ENCODE measurements at regions of chr18 and their contacts with region 1.

Region 1: GRCh38 chr18:45384137-45384961 is 230.9 kb upstream of the SLC14A2 start:
- DNase-seq: peak; percentile 77
- ATAC-seq: peak; percentile 89
- H3K4me3 Mint-ChIP-seq: no peak overlapping the region
- H3K27ac Mint-ChIP-seq: peak overlapping the region; percentile 83; the same call in 1 of the 2 replicates
- H3K4me1 Mint-ChIP-seq: peaks cover 8% of the 10 kb centered on the region
- H3K27me3 Mint-ChIP-seq: no peaks in the 10 kb centered on the region; the same call in 1 of the 2 replicates
- CTCF ChIP-seq: peak; percentile 79

Region 2: DNA sequence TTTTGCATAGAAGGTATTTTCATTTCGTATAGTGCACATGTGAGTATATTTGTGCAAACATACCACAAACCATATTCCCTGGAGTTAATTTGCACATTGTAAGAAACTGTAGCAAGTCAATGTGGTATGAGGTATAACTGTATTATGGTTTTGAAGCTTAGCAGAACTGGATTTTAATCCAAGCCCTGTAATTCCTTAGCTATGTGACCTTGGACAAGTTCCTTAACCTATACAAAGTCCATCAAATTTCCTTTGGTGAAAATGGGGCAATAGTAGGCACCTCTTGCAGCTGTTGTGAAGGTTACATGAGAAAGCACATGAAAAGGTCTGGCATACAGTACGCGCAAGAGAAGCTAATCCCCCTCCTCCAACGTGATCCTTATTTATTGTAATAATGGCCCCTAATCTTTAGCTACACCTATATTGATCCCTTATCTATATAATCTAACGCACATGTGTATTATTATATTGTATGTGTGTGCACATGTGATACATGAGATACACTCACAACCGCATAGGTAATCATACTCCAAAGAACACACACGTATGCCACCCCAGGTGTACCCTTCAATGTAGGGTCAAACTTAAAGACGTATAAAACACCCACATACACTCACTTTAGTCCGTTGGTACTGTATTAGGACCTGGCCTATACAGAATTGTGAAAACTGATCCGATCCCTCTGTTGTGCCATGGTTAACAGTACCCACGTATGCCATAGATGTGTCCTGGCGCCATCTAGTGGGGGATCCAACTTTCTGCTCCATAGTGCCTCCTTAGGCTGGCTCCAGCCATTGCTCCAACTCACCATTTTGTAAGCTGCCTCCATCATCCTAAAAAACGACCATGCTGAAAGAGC is 171.9 kb before region 1 on chr18:
- CTCF ChIA-PET with region 1: interaction called, 13 read pairs
- POLR2A ChIA-PET with region 1: no interaction called
- DNase-seq: peak; percentile 85
- ATAC-seq: peak; percentile 99
- H3K4me3 Mint-ChIP-seq: no peak overlapping the region
- H3K27ac Mint-ChIP-seq: no peak overlapping the region
- H3K4me1 Mint-ChIP-seq: peaks cover 2% of the 10 kb centered on the region; the same call in 1 of the 2 replicates
- H3K27me3 Mint-ChIP-seq: no peaks in the 10 kb centered on the region; the same call in 1 of the 2 replicates
- CTCF ChIP-seq: peak; percentile 70

Region 3: DNA sequence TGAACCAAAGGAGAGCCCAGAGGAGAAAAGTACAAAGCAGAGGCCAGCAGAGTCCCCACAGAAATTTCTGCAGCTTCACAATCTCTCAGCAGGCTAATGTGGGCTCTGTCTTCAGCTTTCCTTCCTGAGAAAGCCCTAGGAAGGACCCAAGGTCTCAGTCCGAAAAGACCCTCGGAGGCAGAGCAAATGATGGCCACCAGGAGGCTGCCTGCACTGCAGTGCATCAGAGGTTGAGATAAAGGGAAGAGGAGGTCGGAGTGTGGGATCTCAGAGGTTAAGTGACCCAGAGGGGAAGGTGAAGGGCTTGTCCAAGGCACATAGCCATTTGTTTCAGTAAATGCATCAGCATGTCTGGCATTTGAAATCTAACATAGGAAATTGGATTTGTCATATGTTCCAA is 68.2 kb before region 1 on chr18:
- CTCF ChIA-PET with region 1: interaction called, 16 read pairs
- POLR2A ChIA-PET with region 1: no interaction called
- DNase-seq: peak; percentile 35
- ATAC-seq: peak; percentile 90
- H3K4me3 Mint-ChIP-seq: no peak overlapping the region
- H3K27ac Mint-ChIP-seq: no peak overlapping the region
- H3K4me1 Mint-ChIP-seq: peaks cover 6% of the 10 kb centered on the region
- H3K27me3 Mint-ChIP-seq: no peaks in the 10 kb centered on the region; the same call in 1 of the 2 replicates
- CTCF ChIP-seq: no peak; the same call in 1 of the 2 replicates

Region 4: GRCh38 chr18:45365835-45366234 is 18.5 kb before region 1 on chr18:
- CTCF ChIA-PET with region 1: interaction called, 10 read pairs
- POLR2A ChIA-PET with region 1: no interaction called
- DNase-seq: no peak
- ATAC-seq: no peak
- H3K4me3 Mint-ChIP-seq: no peak overlapping the region
- H3K27ac Mint-ChIP-seq: no peak overlapping the region
- H3K4me1 Mint-ChIP-seq: peaks cover 27% of the 10 kb centered on the region
- H3K27me3 Mint-ChIP-seq: no peaks in the 10 kb centered on the region
- CTCF ChIP-seq: no peak

Measured in WTC11 (cell line).